Endothelial cell of umbilical vein (primary cell): ENCODE measurements at regions of chr1 and their contacts with region 1.

Region 1: GRCh38 chr1:155729031-155729898 is 40.4 kb downstream of the DAP3 start:
- DNase-seq: peak; percentile 75
- H3K4me3 ChIP-seq: no peak overlapping the region
- H3K27ac ChIP-seq: no peak overlapping the region
- H3K4me1 ChIP-seq: no peaks in the 10 kb centered on the region
- H3K27me3 ChIP-seq: no peaks in the 10 kb centered on the region
- CTCF ChIP-seq: peak; percentile 56 to 73
- POLR2A ChIP-seq: no peak

Region 2: DNA sequence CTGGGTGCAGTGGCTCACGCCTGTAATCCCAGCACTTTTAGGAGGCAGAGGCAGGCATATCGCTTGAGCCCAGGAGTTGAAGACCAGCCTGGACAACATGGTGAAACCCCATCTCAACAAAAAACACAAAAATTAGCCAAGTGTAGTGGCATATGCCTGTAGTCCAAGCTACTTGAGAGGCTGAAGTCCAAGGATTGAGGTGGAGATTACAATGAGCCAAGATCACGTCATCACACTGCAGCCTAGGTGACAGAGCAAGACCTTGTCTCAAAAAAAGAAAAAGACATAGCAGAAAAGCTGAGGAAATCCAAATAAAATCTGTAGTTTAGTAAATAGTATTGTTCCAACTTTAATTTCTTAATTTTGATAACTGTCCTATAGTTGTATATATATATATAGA is 155.2 kb before region 1 on chr1:
- CTCF ChIA-PET with region 1: no interaction called
- POLR2A ChIA-PET with region 1: no interaction called
- dilution Hi-C with region 1: no loop called
- intact Hi-C with region 1: no loop called
- DNase-seq: no peak
- H3K4me3 ChIP-seq: no peak overlapping the region
- H3K27ac ChIP-seq: no peak overlapping the region
- H3K4me1 ChIP-seq: no peaks in the 10 kb centered on the region
- H3K27me3 ChIP-seq: no peaks in the 10 kb centered on the region
- CTCF ChIP-seq: no peak
- POLR2A ChIP-seq: no peak

Region 3: DNA sequence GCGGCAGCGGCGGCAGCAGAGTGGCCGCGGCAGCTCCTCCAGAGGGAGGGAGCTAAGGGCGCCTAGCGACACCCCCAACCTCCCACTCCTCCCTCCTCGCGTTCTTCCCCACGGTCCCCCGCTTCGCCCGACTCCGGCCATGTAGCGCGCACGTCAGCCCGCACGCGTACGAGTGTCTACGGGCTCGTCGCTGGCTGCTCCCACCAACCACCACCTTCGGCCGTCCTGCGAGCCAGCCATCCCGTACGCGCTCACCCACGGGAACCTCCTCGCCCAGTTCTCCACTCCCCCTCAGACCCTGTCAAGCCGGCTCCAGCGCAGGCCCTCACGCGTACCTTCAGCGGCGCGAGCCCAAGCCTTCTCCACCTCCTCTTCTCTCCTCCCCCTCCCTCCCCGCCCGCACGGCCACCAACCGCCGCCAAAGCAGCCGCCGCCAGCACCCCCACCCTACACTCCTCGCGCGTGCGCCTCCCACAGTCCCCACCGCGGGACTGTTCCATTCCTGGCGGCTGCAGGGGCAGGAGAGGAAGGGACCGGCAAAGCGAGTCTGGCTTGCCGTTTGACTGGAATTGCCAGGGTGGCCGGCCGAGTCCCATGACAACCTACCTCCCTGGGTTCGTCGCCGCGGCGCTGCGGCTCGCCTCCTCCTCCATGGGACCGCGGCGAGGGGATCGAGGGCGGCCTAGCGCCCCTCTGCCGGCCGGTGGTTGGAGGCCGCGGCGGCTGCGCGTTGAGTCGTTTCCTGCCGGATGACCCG is 40.8 kb before region 1 on chr1 and contains the start of gene YY1AP1:
- CTCF ChIA-PET with region 1: interaction called, 5 read pairs
- POLR2A ChIA-PET with region 1: no interaction called
- dilution Hi-C with region 1: no loop called
- intact Hi-C with region 1: loop called (anchors 5 kb)
- DNase-seq: peak; percentile 90
- H3K4me3 ChIP-seq: peak within 1 kb of the TSS; percentile 49 to 92 (median 92)
- H3K27ac ChIP-seq: peak within 1 kb of the TSS; percentile 84
- H3K4me1 ChIP-seq: peaks cover 15% of the 10 kb centered on the region
- H3K27me3 ChIP-seq: no peaks in the 10 kb centered on the region
- CTCF ChIP-seq: no peak
- POLR2A ChIP-seq: peak; percentile 55
- total RNA-seq, gene YY1AP1: 42.0 and 42.3 TPM in 2 replicates

Region 4: DNA sequence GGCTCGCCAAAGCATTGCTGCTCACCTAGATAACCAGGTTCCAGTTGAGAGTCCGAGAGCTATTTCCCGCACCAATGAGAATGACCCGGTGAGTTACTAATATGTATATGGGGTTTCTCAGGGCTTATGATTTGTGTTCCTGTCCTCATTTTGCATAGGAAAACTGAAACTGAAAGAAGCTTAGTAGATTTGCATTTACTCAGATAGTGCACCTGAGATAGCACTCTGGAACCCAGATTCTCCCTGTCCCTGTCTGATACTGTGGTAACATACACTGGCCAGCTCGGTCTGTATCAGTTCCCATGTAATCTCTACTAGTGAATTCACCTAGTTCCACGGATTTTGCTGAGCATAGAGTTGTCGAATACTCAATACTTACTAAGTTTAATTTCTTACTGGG is 12.2 kb before region 1 on chr1:
- CTCF ChIA-PET with region 1: interaction called, 15 read pairs
- POLR2A ChIA-PET with region 1: no interaction called
- dilution Hi-C with region 1: no loop called
- intact Hi-C with region 1: no loop called
- DNase-seq: no peak
- H3K4me3 ChIP-seq: no peak overlapping the region
- H3K27ac ChIP-seq: no peak overlapping the region
- H3K4me1 ChIP-seq: no peaks in the 10 kb centered on the region
- H3K27me3 ChIP-seq: no peaks in the 10 kb centered on the region
- CTCF ChIP-seq: no peak
- POLR2A ChIP-seq: no peak

Region 5: GRCh38 chr1:155744711-155745283 is 15.5 kb after region 1 on chr1:
- CTCF ChIA-PET with region 1: interaction called, 11 read pairs
- POLR2A ChIA-PET with region 1: no interaction called
- dilution Hi-C with region 1: no loop called
- intact Hi-C with region 1: no loop called
- DNase-seq: no peak
- H3K4me3 ChIP-seq: peak overlapping the region; percentile 38 to 80 (median 69)
- H3K27ac ChIP-seq: peak overlapping the region; percentile 24
- H3K4me1 ChIP-seq: no peaks in the 10 kb centered on the region
- H3K27me3 ChIP-seq: no peaks in the 10 kb centered on the region
- CTCF ChIP-seq: no peak
- POLR2A ChIP-seq: no peak